Activated B cell treated with CpG ODN at 0.5 μM for 24 hours (primary cell): ENCODE measurements at regions of chr17 and their contacts with region 1.

Region 1: DNA sequence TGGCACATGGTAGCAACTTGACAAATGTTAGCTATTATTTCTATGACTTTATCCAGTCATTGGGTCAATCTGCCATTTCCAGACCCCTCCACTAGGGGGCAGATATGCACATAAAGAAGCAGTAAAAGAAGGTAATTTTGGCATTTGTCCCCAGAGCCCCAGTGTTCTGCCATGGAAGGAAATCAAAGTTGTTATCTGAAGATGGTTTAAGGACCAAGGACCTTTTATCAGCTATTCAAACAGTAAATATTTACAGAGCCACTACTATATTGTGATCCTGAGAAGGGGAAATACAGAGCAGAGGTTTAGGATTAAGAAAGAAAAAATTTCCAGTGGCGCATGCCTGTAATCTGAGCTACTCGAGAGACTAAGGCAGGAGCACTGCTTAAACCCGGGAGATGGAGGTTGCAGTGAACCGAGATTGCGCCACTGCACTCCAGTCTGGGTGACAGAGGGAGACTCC is 20.0 kb downstream of the TRAF4 start:
- DNase-seq: no peak
- ATAC-seq: peak; percentile 86
- H3K4me3 Mint-ChIP-seq: no peak overlapping the region
- H3K27ac Mint-ChIP-seq: no peak overlapping the region
- H3K4me1 Mint-ChIP-seq: peaks cover 10% of the 10 kb centered on the region
- H3K27me3 Mint-ChIP-seq: no peaks in the 10 kb centered on the region
- CTCF ChIP-seq: peak; percentile 80

Region 2: DNA sequence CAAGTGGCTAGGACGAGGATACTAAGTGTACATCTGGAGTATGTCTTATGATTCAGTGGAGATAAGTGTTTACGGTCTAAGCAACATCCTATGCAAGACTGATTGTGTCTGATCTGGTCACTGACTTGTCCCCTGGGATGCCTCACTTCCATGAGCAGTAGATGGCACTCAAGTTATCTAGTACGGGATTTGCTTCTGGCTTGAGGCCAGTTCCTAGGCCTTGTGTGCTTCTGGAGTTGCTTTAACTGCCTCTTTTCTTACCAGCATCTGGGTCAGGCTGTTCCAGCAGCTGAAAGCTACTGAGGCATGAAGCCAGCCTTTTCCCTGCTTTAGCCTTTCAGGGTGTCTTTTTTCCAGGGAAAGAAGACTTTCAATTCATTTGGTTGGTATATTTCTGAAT is 78.9 kb before region 1 on chr17:
- CTCF ChIA-PET with region 1: no interaction called
- POLR2A ChIA-PET with region 1: no interaction called
- intact Hi-C with region 1: no loop called
- DNase-seq: no peak
- ATAC-seq: no peak
- H3K4me3 Mint-ChIP-seq: no peak overlapping the region
- H3K27ac Mint-ChIP-seq: no peak overlapping the region
- H3K4me1 Mint-ChIP-seq: no peaks in the 10 kb centered on the region
- H3K27me3 Mint-ChIP-seq: no peaks in the 10 kb centered on the region
- CTCF ChIP-seq: no peak

Region 3: DNA sequence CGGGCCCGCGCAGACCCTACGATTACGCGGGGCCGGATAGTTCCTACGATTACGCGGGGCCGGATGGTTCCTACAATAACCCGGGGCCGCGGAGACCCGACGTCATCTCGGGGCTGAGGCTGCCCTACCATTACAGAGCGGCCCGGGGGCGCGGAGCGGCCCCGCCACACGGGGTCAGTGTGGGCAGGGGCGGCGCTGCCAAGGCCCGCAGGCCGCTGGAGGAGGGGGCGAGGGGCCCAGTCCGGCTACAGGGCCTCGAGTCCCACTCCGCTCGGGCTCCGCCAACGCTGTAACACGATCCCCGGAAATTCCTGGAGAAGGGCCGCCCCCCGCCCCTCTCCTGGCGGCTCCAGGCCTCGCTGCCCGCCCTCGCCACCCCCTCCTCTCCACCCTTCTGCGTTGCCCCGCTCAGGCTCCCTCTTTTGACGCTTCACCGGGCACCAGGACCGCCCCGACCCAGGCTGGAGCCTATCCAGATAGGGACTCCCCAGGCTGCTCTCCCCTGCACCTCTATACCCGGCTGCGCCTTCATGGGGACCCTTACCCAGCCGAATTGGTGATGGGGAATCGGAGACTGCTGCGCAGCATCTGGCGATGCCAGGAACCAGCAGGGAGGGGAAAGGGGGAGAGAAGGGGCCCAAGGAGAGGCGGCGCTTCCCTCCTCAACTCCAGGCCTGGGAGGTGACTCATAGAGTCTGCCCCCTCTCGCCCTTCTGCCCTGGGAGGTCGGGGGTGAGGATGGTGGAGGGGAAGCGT is 46.1 kb before region 1 on chr17 and contains the start of gene RAB34:
- CTCF ChIA-PET with region 1: interaction called, 12 read pairs
- POLR2A ChIA-PET with region 1: interaction called, 2,384 read pairs
- intact Hi-C with region 1: no loop called
- DNase-seq: peak; percentile 46
- ATAC-seq: peak; percentile 14
- H3K4me3 Mint-ChIP-seq: peak within 1 kb of the TSS; percentile 79
- H3K27ac Mint-ChIP-seq: peak within 1 kb of the TSS; percentile 85
- H3K4me1 Mint-ChIP-seq: peaks cover 49% of the 10 kb centered on the region
- H3K27me3 Mint-ChIP-seq: no peaks in the 10 kb centered on the region
- CTCF ChIP-seq: no peak
- total RNA-seq, gene RAB34: 21.3 and 23.9 TPM in 2 replicates

Region 4: DNA sequence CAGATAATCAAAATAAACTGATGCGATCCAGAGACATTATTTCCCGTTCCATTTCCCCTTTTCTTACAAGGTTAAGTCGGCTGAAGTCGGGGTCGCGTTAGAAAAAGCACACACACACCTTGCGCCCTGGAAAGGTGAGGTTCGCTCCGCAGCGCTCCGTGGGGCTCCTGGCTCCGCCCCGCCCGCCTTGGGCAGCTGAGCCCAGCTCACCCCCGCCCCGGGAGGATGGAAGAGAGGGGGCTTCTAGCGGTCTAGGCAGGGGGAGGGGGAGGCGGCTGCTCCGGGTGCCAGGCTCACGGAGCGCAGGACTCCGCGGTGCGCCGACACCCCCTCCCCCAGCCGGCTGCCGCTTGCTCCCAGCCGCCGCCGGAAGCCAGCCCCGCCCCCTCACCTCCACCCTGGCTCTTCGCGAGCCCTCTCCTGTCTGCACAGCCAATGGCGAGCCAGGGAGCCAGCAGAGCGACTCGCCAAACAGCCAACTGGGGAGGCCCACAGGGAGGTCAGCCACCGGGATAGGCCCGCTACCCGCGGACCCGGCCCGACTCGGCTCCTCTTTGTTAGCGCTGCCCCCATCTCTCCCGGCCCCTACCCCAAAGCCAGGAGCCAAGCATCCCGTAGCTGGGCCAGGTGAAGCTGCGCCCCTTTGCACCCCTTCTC is 48.4 kb after region 1 on chr17:
- CTCF ChIA-PET with region 1: interaction called, 16 read pairs
- POLR2A ChIA-PET with region 1: no interaction called
- intact Hi-C with region 1: loop called (anchors 2 kb)
- DNase-seq: peak; percentile 89
- ATAC-seq: peak; percentile 100
- H3K4me3 Mint-ChIP-seq: peak overlapping the region; percentile 87
- H3K27ac Mint-ChIP-seq: peak overlapping the region; percentile 83
- H3K4me1 Mint-ChIP-seq: peaks cover 31% of the 10 kb centered on the region
- H3K27me3 Mint-ChIP-seq: no peaks in the 10 kb centered on the region
- CTCF ChIP-seq: no peak

Region 5: DNA sequence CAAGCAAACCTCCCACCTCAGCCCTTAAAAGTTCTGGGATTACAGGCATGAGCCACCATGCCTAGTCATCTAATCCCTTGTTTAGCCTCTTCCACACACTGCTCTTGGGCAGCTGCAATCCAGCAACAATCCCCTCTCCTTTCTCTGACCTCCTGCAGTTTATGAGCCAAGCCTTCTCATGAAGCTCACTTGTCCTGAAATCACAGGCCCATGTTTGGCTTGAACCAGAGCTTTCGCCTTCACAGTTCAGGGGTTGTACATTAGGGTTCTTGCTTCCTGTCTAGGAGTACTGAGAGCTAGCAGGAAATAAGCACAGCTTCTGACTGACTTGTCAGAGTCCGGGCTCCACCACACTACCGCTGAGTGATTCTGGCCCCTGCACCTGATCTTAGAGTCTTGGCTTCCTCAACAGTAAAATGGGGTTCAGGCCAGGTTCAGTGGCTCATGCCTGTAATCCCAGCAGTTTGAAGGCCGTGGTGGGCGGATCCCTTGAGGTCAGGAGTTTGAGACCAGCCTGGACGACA is 107.3 kb after region 1 on chr17:
- CTCF ChIA-PET with region 1: interaction called, 4 read pairs
- POLR2A ChIA-PET with region 1: interaction called, 15 read pairs
- intact Hi-C with region 1: no loop called
- DNase-seq: no peak
- ATAC-seq: peak; percentile 99
- H3K4me3 Mint-ChIP-seq: peak overlapping the region; percentile 50
- H3K27ac Mint-ChIP-seq: peak overlapping the region; percentile 95
- H3K4me1 Mint-ChIP-seq: peaks cover 30% of the 10 kb centered on the region
- H3K27me3 Mint-ChIP-seq: no peaks in the 10 kb centered on the region
- CTCF ChIP-seq: no peak

Region 6: DNA sequence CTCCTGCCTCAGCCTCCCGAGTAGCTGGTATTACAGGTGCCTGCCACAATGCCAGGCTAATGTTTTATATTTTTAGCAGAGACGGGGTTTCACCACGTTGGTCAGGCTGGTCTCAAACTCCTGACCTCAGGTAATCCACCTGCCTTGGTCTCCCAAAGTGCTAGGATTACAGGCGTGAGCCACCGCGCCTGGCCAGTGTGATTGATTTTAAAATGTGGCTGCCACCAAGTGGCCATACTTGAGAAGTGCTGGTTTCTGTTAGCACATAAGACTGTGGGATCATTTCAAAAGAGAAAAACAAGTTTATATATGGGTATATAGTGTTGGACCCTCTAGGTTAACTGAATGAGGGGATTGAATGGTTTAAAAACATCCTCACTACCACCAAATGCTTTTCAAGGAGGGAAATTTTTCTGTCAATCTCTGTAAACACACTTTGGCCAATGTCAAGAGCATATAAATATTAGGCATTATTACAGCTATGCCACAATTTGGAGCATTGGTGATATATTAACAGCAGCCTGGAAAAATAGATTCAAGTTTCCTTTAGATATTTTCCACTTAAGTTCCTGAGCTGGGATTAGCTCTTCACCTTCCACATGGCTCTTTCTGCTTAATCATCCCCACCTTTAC is 152.6 kb after region 1 on chr17:
- CTCF ChIA-PET with region 1: interaction called, 66 read pairs
- POLR2A ChIA-PET with region 1: interaction called, 6 read pairs
- intact Hi-C with region 1: loop called (anchors 1 kb)
- DNase-seq: no peak
- ATAC-seq: peak; percentile 90
- H3K4me3 Mint-ChIP-seq: no peak overlapping the region
- H3K27ac Mint-ChIP-seq: peak overlapping the region; percentile 35
- H3K4me1 Mint-ChIP-seq: no peaks in the 10 kb centered on the region
- H3K27me3 Mint-ChIP-seq: no peaks in the 10 kb centered on the region
- CTCF ChIP-seq: peak; percentile 52

Region 7: DNA sequence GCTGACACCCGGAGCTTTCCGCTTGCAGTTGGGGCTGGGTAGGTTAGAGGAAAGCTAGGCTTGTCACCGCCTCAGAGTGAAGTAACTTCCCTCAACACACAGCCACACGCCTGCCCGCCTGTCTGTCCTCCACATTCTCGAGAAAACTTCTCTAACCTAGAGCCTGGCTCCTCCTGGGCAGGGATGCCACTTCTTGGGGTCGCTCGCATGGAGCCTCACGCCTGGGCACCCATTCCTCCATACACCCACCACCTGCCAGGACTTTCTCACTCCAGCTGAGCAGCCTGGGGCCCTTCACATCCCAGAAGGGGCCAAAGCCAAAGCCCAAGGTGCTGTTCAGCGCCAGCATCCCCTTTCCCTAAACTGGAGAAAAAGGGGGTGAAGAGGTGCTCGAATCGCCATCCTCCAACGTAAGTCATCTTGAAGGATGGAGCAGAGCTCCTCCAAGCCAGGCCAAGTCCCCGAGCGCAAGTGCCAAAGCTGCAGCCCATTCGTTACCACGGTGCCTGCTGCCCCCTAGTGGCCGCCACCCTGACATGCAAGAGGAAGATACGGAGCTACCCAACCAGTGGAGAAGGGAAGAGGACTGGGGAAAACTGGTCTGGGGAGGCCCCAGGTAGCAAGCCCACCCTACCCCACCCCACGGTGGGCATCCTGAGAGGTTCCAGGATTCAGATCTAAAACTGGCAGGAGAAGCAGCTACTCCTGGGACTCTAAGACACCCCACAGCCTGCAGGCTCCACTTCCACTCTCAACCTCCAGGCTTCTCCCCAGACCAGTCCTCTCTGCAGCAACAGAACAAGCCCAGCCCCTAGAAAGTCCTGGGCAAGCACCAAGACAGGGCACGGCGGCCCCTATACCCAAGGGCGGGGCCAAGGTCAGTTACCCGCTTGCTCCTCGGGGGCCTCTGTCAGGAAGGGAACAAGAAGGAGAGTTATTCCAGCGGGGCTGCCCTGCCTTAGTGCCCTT is 353.3 kb after region 1 on chr17:
- CTCF ChIA-PET with region 1: interaction called, 11 read pairs
- POLR2A ChIA-PET with region 1: no interaction called
- intact Hi-C with region 1: loop called (anchors 5 kb)
- DNase-seq: peak; percentile 63
- ATAC-seq: peak; percentile 83
- H3K4me3 Mint-ChIP-seq: no peak overlapping the region
- H3K27ac Mint-ChIP-seq: no peak overlapping the region
- H3K4me1 Mint-ChIP-seq: peaks cover 7% of the 10 kb centered on the region
- H3K27me3 Mint-ChIP-seq: no peaks in the 10 kb centered on the region
- CTCF ChIP-seq: peak; percentile 29